Activated CD4-positive, alpha-beta T cell treated with anti-CD3 and anti-CD28 coated beads, Interleukin-2, amount 10 ng/mL, durations not matched to agents 24 days and 14 days (primary cell): ENCODE measurements at regions of chr6 and their contacts with region 1.

Region 1: GRCh38 chr6:118893807-118894424 is at the start of gene ASF1A:
- DNase-seq: peak; percentile 99
- H3K4me3 Mint-ChIP-seq: peak within 1 kb of the TSS; percentile 90
- H3K27ac Mint-ChIP-seq: peak within 1 kb of the TSS; percentile 95
- H3K4me1 Mint-ChIP-seq: peaks cover 43% of the 10 kb centered on the region
- H3K27me3 Mint-ChIP-seq: no peaks in the 10 kb centered on the region
- total RNA-seq, gene ASF1A: 43.2 and 43.3 TPM in 2 replicates

Region 2: DNA sequence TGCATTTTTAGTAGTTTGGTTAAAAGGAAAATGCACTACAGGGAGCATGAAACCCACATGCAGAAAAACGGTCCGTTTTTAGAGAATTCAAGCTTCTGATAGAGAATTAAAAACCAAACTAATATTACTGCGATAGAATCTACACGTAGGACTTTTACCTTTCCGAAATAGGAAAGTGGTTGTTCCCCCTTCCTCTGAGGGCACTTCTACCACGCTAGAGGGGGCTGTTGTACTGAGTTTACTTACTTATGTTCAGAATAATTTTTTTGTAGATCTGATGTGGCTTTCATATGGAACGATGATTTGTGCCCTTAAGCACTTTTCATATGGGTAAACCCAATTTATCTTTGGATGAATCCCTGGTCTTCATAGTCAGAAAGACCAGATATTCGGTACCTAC is 610.1 kb before region 1 on chr6:
- intact Hi-C with region 1: loop called (anchors 10 kb)
- DNase-seq: peak; percentile 83
- H3K4me3 Mint-ChIP-seq: no peak overlapping the region
- H3K27ac Mint-ChIP-seq: no peak overlapping the region
- H3K4me1 Mint-ChIP-seq: peaks cover 2% of the 10 kb centered on the region
- H3K27me3 Mint-ChIP-seq: peaks cover 29% of the 10 kb centered on the region

Region 3: DNA sequence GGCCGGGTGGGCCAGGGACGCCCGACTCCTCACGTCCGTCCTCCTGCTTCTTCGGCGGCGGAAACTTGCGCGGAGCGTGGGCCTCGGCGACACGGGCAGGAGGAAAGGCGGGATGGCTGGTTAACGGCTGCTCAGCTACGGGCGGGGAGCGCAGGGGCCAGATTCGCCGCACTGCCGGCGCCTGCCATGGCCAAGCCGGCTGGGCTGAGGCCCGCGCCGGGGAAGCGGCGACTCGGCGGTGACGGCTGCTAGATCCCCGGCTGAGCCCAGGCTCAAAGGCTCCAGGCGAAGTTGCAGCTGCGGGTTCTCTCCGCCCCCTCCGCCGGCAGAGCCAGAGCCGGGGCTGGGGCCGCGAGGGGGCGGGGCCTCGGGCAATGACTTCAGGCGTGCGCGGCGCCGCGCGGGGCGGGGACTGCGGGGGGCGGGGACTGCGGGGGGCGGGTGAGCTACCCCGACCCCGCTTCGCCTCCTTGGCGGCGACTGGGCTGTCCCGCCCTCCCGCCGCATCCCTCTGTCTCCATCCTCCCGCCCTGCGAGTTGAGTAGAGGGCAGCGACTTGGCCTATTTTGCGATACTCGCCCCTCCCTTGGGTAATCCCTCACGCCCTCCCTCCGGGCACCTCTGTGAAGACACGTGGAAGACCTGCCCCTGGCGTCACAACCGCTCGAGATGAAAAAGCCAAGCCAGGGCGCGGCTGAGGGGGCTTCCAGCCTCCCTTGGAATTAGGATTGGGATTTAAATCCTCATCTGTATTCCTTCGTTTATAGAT is 242.4 kb before region 1 on chr6 and contains the start of gene CEP85L:
- intact Hi-C with region 1: loop called (anchors 1 kb)
- DNase-seq: peak; percentile 96
- H3K4me3 Mint-ChIP-seq: peak within 1 kb of the TSS; percentile 90
- H3K27ac Mint-ChIP-seq: peak within 1 kb of the TSS; percentile 93
- H3K4me1 Mint-ChIP-seq: peaks cover 29% of the 10 kb centered on the region
- H3K27me3 Mint-ChIP-seq: no peaks in the 10 kb centered on the region
- total RNA-seq, gene CEP85L: 42.3 and 42.7 TPM in 2 replicates

Region 4: DNA sequence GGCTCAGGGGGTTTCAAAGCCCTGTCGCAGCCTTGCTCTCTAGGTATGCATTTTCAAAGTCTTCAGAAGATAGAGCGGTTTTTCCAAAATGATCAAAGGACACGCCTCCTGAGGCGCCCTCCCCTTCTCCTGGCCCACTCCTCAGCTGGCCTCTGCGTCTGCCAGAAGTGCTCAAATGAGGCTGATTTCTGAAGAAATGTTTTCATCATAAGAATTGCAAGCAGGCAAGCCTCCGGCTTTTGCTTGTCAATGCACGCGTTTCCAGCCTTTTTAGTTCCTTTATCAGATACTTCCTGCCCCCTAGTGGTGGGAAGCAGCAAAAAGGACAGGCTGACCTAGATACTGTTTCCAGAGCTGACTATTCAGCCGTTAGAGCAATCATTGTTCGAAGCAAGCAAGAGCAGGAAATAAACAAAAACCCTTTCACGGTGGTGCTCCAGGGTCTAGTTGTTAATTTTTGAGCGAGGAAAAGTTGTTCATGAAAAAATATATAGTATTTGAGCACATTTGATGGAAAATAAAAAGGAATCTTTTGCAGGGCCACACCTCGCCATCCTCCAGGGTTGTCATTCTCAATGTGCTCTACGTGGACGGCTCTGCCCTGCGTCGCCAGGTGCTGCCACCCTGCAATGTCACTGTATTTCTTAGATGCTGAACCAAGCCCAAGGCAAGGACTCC is 93.4 kb before region 1 on chr6:
- intact Hi-C with region 1: loop called (anchors 1 kb)
- DNase-seq: peak; percentile 95
- H3K4me3 Mint-ChIP-seq: peak overlapping the region; percentile 60
- H3K27ac Mint-ChIP-seq: peak overlapping the region; percentile 51
- H3K4me1 Mint-ChIP-seq: peaks cover 30% of the 10 kb centered on the region
- H3K27me3 Mint-ChIP-seq: no peaks in the 10 kb centered on the region

Region 5: GRCh38 chr6:118869894-118870589 is 23.9 kb before region 1 on chr6:
- intact Hi-C with region 1: loop called (anchors 2 kb)
- DNase-seq: no peak
- H3K4me3 Mint-ChIP-seq: no peak overlapping the region
- H3K27ac Mint-ChIP-seq: peak overlapping the region; percentile 71
- H3K4me1 Mint-ChIP-seq: peaks cover 24% of the 10 kb centered on the region
- H3K27me3 Mint-ChIP-seq: no peaks in the 10 kb centered on the region

Region 6: GRCh38 chr6:118881440-118882313 is 12.2 kb before region 1 on chr6:
- intact Hi-C with region 1: no loop called
- DNase-seq: no peak
- H3K4me3 Mint-ChIP-seq: peak overlapping the region; percentile 5
- H3K27ac Mint-ChIP-seq: no peak overlapping the region
- H3K4me1 Mint-ChIP-seq: peaks cover 31% of the 10 kb centered on the region
- H3K27me3 Mint-ChIP-seq: no peaks in the 10 kb centered on the region

Region 7: DNA sequence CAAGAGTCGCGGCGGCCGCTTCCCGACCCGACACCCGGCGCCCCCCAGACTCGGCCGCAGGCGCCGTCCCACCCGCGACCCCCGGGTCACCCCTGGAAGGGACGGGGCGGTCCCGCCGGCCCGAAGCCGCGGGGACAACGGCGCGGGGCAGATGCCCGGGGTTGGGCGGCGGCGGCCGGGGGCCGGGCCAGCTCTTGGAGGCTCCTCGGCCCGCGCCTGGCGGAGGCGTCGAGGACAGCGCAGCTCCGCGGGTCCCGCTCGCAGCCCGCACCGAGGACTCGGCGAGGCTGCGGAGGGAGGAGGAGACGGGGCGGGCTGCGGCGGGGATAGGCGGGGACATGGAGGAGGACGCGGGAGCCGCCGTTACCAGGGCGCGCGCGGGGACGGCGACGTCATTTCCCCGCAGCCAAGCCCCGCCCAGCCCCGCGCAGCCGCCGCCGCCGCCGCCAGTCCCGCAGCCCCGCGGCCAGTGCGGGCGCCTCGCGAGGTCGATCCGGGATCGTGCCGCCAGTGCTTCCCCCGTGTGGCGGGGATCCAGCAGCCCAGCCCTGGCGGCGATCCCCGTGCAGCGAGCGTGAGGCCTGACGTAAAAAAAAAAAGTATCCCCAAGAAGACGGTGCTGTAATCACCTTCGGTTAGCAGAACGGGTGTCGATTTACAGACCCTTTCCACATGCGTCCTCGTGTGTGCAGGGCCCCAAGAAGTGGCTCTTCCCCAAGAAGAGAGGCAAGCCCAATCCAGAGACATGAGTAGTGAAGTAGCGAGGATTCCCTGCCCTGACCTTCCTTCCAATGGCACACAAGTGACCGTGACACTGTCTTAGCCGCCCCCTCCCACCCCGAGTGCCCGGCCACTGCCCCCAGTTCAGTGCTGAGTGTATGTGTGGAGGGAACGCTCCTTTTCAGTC is 184.7 kb after region 1 on chr6 and contains the start of gene FAM184A:
- intact Hi-C with region 1: loop called (anchors 1 kb)
- DNase-seq: peak; percentile 94
- H3K4me3 Mint-ChIP-seq: peak within 1 kb of the TSS; percentile 93
- H3K27ac Mint-ChIP-seq: peak within 1 kb of the TSS; percentile 93
- H3K4me1 Mint-ChIP-seq: peaks cover 37% of the 10 kb centered on the region
- H3K27me3 Mint-ChIP-seq: peaks cover 6% of the 10 kb centered on the region
- total RNA-seq, gene FAM184A: 7.5 and 9.0 TPM in 2 replicates